Breast epithelium (tissue), 4 donors: ENCODE measurements at regions of chr7 and their contacts with region 1.

Region 1: DNA sequence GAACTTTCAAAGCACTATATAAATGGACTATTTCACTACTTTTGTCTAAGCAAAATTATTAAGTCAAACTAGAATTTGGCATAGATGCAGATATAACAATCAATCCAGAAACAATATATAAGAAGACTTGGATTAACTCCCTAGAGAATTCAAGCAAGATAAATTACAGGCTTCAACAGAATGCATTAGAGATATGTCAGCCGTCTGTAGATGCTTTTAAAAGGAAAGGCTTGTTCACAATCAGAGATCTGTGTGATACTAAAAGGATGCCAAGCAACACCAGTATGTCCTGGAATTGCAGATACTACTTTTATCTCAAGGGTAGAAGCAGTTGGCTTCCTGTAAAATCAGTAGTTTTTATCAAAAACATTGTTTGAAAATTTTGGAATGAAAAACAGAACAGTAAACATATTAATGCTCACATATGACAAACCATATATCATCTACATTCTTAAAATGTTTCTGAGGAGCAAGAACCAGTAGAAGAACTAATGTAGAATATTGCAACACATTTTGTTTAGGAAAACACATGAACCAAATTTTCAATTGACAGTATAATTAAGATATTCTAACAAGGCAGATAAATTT is 947.9 kb upstream of the LRRN3 start:
- DNase-seq: no peak
- H3K4me3 ChIP-seq: no peak overlapping the region
- H3K27ac ChIP-seq: no peak overlapping the region
- H3K4me1 ChIP-seq: no peaks in the 10 kb centered on the region
- H3K27me3 ChIP-seq: no peaks in the 10 kb centered on the region
- CTCF ChIP-seq: no peak
- POLR2A ChIP-seq: no peak

Region 2: DNA sequence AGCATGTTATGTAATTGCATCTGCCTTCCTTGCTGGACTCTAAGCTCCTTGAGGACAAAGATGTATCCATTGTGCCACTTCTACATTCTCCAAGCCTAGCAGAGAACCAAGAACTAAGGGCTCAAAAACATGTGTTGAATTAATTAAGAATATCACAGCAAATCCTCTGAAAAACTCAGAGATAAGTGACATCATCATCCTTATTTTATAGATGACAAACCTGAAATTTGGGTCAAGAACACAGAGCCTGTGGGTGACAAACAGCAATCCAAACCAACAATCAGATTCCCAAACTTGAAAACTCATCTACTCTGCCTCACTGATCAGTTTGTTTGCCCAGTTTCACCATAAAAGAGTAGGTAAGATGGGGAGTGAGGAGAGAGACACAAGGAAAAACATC is 444.3 kb after region 1 on chr7:
- intact Hi-C with region 1: loop called (anchors 5 kb)
- DNase-seq: no peak
- H3K4me3 ChIP-seq: no peak overlapping the region
- H3K27ac ChIP-seq: no peak overlapping the region
- H3K4me1 ChIP-seq: no peaks in the 10 kb centered on the region
- H3K27me3 ChIP-seq: no peaks in the 10 kb centered on the region
- CTCF ChIP-seq: no peak
- POLR2A ChIP-seq: no peak